Aorta (tissue), 5 donors: ENCODE measurements at regions of chr21 and their contacts with region 1.

Region 1: DNA sequence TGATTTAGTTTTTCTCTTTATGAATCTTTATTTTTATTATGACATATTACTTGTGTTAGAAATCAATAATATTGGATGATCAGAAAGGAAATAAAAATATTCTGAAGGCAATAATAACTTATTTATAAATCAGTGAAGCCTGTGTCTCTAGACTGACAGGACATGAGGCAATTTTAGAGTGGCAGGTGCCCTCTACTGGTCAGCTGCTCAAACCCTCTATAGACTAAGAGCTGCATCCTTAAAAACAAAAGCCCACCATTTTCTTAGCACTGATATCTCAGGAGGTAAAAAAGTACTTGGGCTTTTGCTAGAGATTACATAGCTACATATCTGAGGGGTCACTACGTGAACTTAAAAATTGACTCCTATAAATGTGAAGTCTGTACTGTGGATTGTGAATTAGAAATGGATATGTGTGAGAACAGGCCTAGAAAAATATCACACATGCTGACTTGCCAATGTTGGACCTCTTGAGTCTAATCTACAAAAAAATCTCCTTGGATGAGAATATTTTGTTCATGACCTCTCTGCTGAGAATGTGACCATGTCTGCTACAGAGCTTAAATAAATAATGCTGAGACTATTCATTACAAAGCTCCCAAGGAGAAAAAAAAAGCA is 597.9 kb upstream of the ADAMTS5 start:
- DNase-seq: no peak
- ATAC-seq: peak; percentile 65
- H3K4me3 ChIP-seq: no peak overlapping the region
- H3K27ac ChIP-seq: no peak overlapping the region
- H3K4me1 ChIP-seq: no peaks in the 10 kb centered on the region
- H3K27me3 ChIP-seq: no peaks in the 10 kb centered on the region

Region 2: DNA sequence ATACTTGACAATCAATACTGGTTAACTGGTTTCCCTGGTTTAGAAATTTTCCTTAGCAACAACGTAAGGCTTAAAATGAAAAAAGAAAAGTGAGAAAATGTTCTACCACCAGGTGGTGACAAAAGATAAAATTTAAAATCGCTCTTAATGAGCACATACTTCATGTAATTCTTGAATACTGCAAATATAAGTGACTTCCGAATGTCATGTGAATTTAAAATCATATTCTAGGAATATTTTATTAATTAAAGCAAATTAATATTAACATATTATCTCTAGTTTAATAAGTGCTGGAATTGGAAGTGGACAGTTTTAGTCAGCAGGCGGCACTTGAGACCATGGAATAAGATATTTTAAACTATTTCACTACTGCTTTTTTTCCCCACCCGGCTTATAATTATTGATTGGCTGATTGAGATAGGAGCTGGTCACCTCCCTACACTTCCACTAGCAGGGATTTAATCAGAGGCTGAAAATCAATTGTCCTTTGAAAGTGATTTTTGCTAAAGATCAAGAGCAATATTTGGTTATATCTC is 714.6 kb before region 1 on chr21:
- intact Hi-C with region 1: loop called in 1 of 2 experiments (anchors 10 kb)
- DNase-seq: no peak
- ATAC-seq: no peak
- H3K4me3 ChIP-seq: no peak overlapping the region
- H3K27ac ChIP-seq: no peak overlapping the region
- H3K4me1 ChIP-seq: no peaks in the 10 kb centered on the region
- H3K27me3 ChIP-seq: no peaks in the 10 kb centered on the region

Region 3: GRCh38 chr21:28336314-28336713 is 771.5 kb after region 1 on chr21:
- intact Hi-C with region 1: loop called in 1 of 2 experiments (anchors 10 kb)
- DNase-seq: no peak
- ATAC-seq: no peak
- H3K4me3 ChIP-seq: no peak overlapping the region
- H3K27ac ChIP-seq: no peak overlapping the region
- H3K4me1 ChIP-seq: no peaks in the 10 kb centered on the region
- H3K27me3 ChIP-seq: no peaks in the 10 kb centered on the region